Posterior vena cava (tissue), 2 donors: ENCODE measurements at regions of chr11 and their contacts with region 1.

Region 1: DNA sequence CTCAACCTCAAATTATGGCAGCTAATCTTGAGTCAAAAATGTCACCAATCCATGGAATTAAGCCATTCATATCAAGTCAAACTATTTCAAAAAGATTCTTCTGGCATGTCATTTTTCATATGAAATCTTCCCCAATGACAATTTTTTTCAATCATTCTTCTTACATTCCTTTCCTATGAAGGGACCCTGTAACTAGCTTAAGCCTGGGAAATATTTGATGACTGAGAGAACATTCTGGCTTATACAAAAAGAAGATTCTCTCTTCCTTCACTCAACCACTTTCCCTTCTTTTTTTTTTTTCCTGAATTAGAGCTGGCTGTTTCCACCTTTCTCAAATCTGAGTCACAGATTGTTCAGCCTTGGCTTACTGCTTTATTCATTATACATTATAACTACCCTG is 903.7 kb downstream of the FAM181B start:
- DNase-seq: no peak

Region 2: GRCh38 chr11:81331088-81331487 is 498.9 kb before region 1 on chr11:
- intact Hi-C with region 1: loop called in 1 of 2 experiments (anchors 10 kb)
- DNase-seq: no peak

Region 3: DNA sequence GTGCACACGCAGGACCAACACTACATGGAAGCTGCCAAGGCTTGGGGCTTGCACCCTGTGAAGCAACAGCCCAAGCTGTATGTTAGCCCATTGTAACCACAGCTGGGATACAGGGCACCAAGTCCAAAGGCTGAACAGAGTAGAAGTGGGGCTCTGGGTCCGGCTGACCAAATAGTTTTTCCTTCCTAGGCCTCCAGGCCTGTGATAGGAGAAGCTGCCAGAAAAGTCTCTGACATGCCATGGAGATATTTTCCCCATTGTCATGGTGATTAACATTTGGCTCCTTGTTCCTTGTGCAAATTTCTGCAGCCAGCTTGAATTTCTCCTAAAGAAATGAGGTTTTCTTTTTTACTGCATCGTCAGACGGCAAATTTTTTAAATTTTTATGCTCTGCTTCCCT is 37.6 kb before region 1 on chr11:
- intact Hi-C with region 1: loop called in 1 of 2 experiments (anchors 2 kb)
- DNase-seq: no peak

Region 4: GRCh38 chr11:82270870-82271269 is 440.9 kb after region 1 on chr11:
- intact Hi-C with region 1: no loop called
- DNase-seq: no peak